Right cardiac atrium (tissue), 5 donors: ENCODE measurements at regions of chr18 and their contacts with region 1.

Region 1: GRCh38 chr18:61679836-61680235 is 213.0 kb downstream of the RNF152 start:
- DNase-seq: no peak
- ATAC-seq: no peak
- H3K4me3 ChIP-seq: no peak overlapping the region
- H3K27ac ChIP-seq: no peak overlapping the region
- H3K4me1 ChIP-seq: no peaks in the 10 kb centered on the region
- H3K27me3 ChIP-seq: no peaks in the 10 kb centered on the region

Region 2: DNA sequence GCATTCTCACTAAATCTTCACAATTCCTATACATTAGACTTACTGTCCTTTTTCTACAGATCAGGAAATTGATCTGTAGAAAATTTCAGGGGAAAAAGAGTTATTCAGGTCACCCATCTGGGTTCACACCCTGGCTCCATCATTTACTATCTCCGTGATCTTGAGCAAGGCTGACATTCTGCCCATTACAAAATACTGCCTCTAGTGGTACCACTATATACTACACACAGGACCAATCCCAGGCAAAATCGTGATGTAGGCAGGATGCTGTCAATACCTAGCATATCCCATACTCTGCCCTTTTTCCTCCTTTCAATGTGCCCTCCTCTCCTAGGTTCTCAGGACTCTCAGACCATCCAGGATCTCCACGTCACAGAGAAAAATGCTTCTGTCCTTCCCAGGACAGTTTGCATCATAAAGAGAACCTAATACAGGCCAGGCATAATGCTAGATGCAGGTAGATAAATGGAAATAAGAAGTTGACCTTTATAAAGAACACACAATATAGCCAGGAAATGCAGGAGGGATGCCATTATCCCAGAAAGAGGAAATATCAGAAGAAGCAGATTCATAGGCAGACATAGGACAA is 244.7 kb before region 1 on chr18:
- intact Hi-C with region 1: loop called in 1 of 4 experiments (anchors 10 kb)
- DNase-seq: no peak
- ATAC-seq: no peak
- H3K4me3 ChIP-seq: no peak overlapping the region
- H3K27ac ChIP-seq: no peak overlapping the region
- H3K4me1 ChIP-seq: no peaks in the 10 kb centered on the region
- H3K27me3 ChIP-seq: no peaks in the 10 kb centered on the region

Region 3: DNA sequence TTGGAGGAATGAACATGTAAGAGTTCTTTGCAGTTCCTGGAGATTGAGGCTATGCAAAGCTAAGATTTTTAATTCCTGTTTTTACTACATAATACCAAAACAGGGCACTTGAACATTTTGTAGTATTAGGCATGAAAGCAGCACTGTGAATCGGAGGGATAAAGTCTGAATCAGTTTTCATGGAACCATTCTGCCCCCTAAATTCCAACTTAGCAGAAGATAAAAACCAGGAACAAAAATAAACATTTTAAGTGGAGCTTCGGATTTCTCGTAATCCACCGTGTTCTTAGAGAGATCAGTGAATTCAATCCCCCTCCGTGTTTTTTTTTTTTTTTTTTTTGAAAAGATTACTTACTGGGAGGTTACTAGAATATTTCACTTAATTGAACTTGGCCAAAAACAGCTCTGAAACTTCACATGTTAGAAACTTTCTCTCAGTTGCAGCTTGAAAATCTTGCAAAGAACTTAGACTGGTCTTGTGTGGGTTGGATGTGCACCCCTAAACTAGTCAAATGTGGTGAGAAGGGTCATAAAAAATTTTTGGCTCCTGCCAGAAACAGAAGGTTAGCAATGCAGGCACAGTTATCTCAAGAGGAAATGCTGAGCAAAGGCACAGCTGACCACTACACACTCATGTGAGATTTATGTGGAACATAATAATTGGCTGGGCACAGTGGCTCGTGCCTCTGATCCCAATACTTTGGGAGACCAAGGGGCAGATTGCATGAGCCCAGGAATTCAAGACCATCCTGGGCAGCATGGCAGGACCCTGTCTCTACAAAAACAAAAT is 358.3 kb after region 1 on chr18:
- intact Hi-C with region 1: no loop called
- DNase-seq: no peak
- ATAC-seq: peak; percentile 45 to 75
- H3K4me3 ChIP-seq: no peak overlapping the region
- H3K27ac ChIP-seq: no peak overlapping the region
- H3K4me1 ChIP-seq: peaks cover 4% of the 10 kb centered on the region
- H3K27me3 ChIP-seq: no peaks in the 10 kb centered on the region